ENCODE measurements at regions of chr21 and their contacts with region 1.

Region 1: DNA sequence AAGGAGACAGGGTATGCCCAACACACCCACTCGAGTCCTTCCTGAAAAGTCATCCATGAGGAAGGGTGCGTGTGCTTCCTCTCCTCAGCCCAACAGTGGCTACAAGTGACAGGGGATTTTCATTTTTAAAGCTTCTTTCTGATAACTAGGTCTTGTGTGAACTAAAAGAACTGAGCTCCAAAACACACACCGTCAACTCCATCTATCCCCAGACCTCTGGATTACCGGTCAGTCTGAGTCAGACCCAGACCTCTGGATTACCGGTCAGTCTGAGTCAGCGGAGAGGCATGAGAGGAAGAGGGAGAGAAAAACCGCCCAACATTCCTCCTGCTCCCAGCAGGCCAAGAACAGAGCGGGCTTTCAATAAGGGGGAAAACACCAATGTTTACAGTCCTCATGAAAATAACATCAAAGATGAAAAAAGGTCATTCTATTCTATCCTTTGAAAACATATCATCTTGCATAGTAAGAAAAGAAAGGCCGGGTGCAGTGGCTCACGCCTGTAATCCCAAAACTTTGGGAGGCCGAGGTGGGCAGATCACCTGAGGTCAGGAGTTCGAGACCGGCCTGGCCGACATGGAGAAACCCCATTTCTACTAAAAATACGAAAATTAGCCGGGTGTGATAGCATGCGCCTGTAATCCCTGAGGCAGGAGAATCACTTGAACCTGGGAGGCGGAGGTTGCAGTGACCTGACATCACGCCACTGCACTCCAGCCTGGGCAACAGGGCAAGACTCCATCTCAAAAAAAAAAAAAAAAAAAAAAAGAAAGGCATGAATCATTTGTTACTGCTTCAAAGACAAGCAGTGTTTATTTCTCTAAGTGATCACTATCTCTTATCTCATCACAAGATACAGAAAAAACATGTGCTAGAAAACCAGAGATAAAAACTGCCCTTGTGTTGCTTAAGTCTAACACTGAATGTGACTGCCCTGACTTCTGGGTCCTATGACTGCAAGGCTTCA is 3.4 kb downstream of the PTTG1IP start:
- DNase-seq: peak; percentile 88
- H3K4me3 ChIP-seq: peak overlapping the region in 3 of 4 donors; percentile 1 to 91 (median 26)
- H3K27ac ChIP-seq: peak overlapping the region; percentile 95 to 98 (median 98)
- H3K4me1 ChIP-seq: peaks cover 0 to 84% (median 79%) of the 10 kb centered on the region in 4 donors
- H3K27me3 ChIP-seq: no peaks in the 10 kb centered on the region
- CTCF ChIP-seq: no peak
- EP300 ChIP-seq: peak in 1 of 4 donors; percentile 8
- POLR2A ChIP-seq: no peak

Region 2: DNA sequence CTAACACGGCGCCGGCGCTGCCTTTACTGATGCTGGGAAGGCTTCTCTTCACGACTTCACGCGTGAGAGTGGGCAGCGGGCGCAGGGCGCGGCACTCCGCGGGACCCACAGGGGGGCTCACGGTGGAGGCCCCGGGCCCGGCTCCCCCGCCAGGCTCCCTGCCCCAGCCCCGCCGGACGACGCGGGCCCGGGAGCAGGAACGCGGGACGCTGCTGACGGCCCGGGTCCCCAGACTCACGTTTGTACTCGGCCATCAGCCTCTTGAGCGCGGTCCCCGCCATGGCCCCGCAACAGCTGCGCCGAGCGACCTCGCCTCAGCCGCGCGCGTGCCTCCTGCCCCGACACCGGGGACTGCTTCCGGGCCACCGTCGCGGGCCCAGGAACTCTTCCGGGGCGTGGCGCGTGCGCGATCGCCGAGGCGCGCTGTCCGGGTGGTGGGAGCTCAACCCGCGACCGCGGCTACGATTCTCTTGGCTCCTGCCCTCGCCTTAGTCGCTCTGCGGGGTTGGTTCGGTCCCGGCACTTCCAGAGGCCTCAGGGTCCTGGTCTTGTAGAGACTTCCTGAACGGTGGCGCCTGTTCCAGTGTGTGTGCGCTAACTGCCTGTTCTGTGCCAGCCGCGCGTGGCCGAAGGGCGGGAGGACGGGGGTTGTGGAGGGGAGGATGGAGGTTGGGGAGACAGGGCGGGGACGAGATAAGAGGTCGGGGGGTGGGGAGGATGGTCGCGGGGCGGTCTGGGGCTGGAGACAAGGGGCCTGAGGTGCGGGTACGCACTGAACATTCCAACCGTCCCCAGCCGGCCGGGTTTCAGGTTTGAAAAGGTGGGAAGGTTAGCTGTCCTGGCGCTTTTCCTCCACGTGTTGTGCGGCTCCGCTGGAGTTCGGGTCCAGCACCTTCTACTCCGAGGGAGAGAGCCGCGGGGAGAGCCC is 68.3 kb before region 1 on chr21 and contains the start of gene UBE2G2:
- intact Hi-C with region 1: loop called (anchors 5 kb)
- DNase-seq: peak; percentile 87
- H3K4me3 ChIP-seq: peak within 1 kb of the TSS; percentile 55 to 83 (median 78)
- H3K27ac ChIP-seq: peak within 1 kb of the TSS; percentile 73 to 85 (median 78)
- H3K4me1 ChIP-seq: peaks cover 0 to 34% (median 25%) of the 10 kb centered on the region in 4 donors
- H3K27me3 ChIP-seq: no peaks in the 10 kb centered on the region
- CTCF ChIP-seq: no peak
- EP300 ChIP-seq: no peak
- POLR2A ChIP-seq: peak; percentile 33 to 65
- total RNA-seq, gene UBE2G2: 51.5 to 101 (median 63.1) TPM